B cell (primary cell): ENCODE measurements at regions of chr1 and their contacts with region 1.

Region 1: DNA sequence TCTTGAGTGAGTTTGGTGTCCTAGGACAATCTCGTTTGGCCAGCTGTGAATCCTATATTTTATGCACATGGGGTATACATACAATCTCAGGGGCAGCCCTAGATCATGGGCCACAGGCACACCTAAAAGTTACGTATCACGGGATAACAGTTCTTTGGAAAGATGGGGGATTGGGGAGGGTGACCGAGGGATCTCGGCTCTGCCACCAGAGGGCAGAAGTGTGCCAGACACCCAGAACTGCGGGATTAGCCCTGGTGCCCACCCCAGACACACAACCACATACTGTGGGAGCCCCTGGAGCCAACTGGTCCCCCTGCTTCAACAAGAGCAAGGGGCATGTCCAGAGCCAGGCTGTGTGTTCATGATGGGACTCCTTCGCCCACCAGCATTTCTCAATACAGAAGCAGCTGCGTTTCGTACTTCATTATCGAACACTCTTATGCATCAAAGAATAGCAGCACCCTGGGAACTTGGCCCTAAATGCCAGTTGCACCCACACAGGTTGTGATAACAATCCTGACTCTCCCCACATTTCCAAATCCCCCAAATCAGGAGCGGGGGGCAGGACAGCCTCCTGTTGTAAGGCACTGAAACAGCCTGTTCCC is 37.4 kb downstream of the TMCO4 start:
- DNase-seq: peak; percentile 24
- ATAC-seq: no peak
- H3K4me3 ChIP-seq: no peak overlapping the region
- H3K4me3 Mint-ChIP-seq: no peak overlapping the region
- H3K27ac ChIP-seq: no peak overlapping the region
- H3K27ac Mint-ChIP-seq: no peak overlapping the region
- H3K4me1 ChIP-seq: no peaks in the 10 kb centered on the region
- H3K4me1 Mint-ChIP-seq: peaks cover 5% of the 10 kb centered on the region
- H3K27me3 ChIP-seq: no peaks in the 10 kb centered on the region
- H3K27me3 Mint-ChIP-seq: no peaks in the 10 kb centered on the region
- CTCF ChIP-seq: peak; percentile 66

Region 2: DNA sequence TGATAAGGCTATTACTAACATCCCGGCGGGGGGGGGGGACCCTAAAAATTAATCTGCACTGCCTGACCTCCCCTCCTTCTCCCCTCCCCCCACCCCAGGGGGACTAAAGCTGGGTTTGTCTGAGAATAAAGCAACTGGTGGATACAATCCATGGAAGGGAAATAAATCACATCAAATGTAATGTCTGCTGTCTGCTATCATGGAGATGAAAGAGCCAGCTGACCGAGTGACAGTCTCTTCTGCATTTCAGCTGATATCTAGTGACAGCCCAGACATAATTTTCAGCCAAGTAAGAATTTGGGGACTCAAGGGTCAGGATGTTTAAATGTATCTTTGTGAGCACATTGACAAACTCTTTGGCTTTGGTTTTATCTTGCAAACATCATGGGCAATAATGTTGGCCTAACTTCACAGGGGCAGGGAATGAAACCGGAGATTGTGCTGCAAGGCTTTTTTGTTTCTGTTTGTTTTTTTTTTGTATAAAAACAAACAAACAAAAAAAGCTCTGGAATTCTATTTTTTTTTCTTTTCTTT is 53.0 kb before region 1 on chr1:
- CTCF ChIA-PET with region 1: no interaction called
- POLR2A ChIA-PET with region 1: no interaction called
- intact Hi-C with region 1: no loop called
- DNase-seq: no peak
- ATAC-seq: no peak
- H3K4me3 ChIP-seq: no peak overlapping the region
- H3K4me3 Mint-ChIP-seq: no peak overlapping the region
- H3K27ac ChIP-seq: no peak overlapping the region
- H3K27ac Mint-ChIP-seq: no peak overlapping the region
- H3K4me1 ChIP-seq: no peaks in the 10 kb centered on the region
- H3K4me1 Mint-ChIP-seq: peaks cover 3% of the 10 kb centered on the region
- H3K27me3 ChIP-seq: no peaks in the 10 kb centered on the region
- H3K27me3 Mint-ChIP-seq: no peaks in the 10 kb centered on the region
- CTCF ChIP-seq: no peak

Region 3: DNA sequence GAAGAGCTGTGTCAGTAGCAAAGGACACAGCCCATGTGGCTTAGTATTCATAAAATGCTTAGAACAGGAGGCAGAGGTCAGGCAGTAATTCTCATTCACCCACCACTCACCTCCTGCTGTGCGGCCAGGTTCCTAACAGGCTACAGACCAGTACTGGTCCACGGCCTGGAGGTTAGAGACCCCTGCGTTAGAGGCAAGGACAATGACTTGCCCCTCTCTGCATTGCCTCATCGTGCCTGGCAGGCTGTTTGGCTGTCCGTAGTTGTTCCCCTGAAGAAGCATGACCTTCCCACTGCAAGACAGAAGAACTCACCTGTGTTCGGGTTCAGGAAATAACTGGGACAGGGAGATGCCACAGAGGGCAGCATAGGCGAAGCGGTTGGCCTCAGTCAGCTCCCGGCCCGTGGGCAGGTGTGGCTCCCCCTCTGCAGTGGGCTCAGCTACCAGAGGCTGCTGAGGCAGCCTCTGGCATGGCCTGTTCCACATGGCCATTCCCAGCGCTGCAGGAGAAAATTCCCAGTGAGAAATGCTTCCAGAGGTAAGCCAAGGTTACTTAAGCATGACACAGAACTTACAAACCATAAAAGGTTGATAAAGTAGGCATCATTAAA is 18.1 kb after region 1 on chr1:
- CTCF ChIA-PET with region 1: no interaction called
- POLR2A ChIA-PET with region 1: interaction called, 10 read pairs
- intact Hi-C with region 1: no loop called
- DNase-seq: no peak
- ATAC-seq: no peak
- H3K4me3 ChIP-seq: no peak overlapping the region
- H3K4me3 Mint-ChIP-seq: no peak overlapping the region
- H3K27ac ChIP-seq: no peak overlapping the region
- H3K27ac Mint-ChIP-seq: no peak overlapping the region
- H3K4me1 ChIP-seq: no peaks in the 10 kb centered on the region
- H3K4me1 Mint-ChIP-seq: no peaks in the 10 kb centered on the region
- H3K27me3 ChIP-seq: no peaks in the 10 kb centered on the region
- H3K27me3 Mint-ChIP-seq: no peaks in the 10 kb centered on the region
- CTCF ChIP-seq: no peak

Region 4: DNA sequence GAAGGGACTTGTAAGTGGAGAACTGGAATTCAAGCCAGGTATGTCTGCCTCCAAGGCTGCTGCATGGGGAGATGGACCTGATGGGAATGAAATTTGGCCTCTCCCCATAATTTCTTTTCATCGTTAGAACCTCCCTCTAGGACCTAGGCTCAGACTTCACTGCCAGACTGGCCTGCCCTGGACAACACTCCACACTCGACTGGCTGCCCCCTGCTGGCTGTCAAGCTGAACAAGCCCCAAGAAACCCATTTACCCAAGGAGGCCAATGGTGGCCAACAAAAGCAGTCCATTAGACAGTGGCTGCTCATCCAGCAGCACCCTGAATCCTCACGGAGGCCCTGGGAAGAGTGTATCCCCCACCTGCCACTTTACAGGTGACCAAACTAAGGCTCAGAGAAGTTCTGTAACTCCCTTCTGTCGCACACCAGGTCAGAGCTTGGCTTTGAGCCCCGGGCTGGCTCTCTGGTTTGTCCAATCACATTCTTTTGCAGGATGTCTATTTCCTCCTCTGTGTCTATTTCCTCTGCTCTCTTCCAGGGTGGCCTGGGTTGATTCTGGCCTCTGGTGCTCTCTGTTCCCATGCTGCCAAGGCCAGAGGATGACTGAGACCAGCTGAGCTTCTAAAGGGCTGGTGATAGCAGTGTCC is 49.1 kb after region 1 on chr1:
- CTCF ChIA-PET with region 1: interaction called, 5 read pairs
- POLR2A ChIA-PET with region 1: no interaction called
- intact Hi-C with region 1: loop called (anchors 2 kb)
- DNase-seq: peak; percentile 24
- ATAC-seq: no peak
- H3K4me3 ChIP-seq: no peak overlapping the region
- H3K4me3 Mint-ChIP-seq: no peak overlapping the region
- H3K27ac ChIP-seq: no peak overlapping the region
- H3K27ac Mint-ChIP-seq: peak overlapping the region; percentile 8
- H3K4me1 ChIP-seq: no peaks in the 10 kb centered on the region
- H3K4me1 Mint-ChIP-seq: no peaks in the 10 kb centered on the region
- H3K27me3 ChIP-seq: peaks cover 0 to 4% (median 0%) of the 10 kb centered on the region in 4 experiments
- H3K27me3 Mint-ChIP-seq: peaks cover 34% of the 10 kb centered on the region
- CTCF ChIP-seq: peak; percentile 53